ENCODE measurements at regions of chr5 and their contacts with region 1.

Region 1: DNA sequence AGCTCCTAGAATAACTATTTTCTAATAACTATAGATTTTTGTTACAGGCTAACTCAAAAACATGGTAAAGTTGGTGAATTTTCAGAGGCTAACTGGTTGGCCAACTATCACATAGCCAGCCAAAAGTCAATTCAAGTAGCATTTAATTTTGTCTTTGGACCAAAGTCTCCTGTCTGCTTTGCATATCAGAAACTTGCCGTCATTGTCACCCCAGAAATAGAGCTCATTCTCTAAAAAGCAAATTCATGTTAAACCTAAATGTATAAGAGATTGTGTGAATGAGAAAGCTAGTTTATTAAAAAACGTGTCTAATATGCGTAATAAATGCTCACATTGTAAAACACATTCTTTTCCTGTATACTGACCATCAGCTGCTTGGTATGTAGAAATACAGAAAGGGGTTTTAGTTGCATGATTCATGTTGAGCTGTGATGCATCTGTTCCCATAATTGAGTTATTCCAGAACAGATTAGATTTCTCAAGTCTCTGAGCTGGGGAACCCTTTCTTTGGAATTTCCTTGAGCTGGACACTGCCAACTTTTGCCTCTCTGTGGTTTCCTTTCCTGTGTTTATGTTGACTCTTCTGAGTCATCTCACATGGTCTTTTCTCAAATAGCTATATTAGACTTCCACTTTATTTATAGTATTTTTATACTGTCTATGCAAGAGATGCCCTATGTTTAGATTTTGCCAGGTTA is 7.3 kb downstream of the SRFBP1 start:
- DNase-seq: no peak
- ATAC-seq: peak; percentile 81 to 85
- H3K4me3 ChIP-seq: no peak overlapping the region
- H3K27ac ChIP-seq: peak overlapping the region in 1 of 4 donors; percentile 40
- H3K4me1 ChIP-seq: peaks cover 21 to 22% of the 10 kb centered on the region in 2 donors
- H3K27me3 ChIP-seq: no peaks in the 10 kb centered on the region
- CTCF ChIP-seq: no peak
- POLR2A ChIP-seq: no peak

Region 2: GRCh38 chr5:121870489-121870888 is 98.6 kb before region 1 on chr5:
- in situ Hi-C with region 1: no loop called
- intact Hi-C with region 1: no loop called
- DNase-seq: no peak
- ATAC-seq: no peak
- H3K4me3 ChIP-seq: no peak overlapping the region
- H3K27ac ChIP-seq: no peak overlapping the region
- H3K4me1 ChIP-seq: peaks cover 7 to 13% of the 10 kb centered on the region in 2 donors
- H3K27me3 ChIP-seq: no peaks in the 10 kb centered on the region
- CTCF ChIP-seq: no peak
- POLR2A ChIP-seq: no peak

Region 3: GRCh38 chr5:122076664-122077365 is 107.8 kb after region 1 on chr5:
- in situ Hi-C with region 1: no loop called
- intact Hi-C with region 1: loop called (anchors 5 kb)
- DNase-seq: peak; percentile 29 to 34
- ATAC-seq: peak in 1 of 2 donors; percentile 31
- H3K4me3 ChIP-seq: peak overlapping the region; percentile 49 to 77 (median 56)
- H3K27ac ChIP-seq: peak overlapping the region in 1 of 4 donors; percentile 18
- H3K4me1 ChIP-seq: peaks cover 0 to 17% of the 10 kb centered on the region in 2 donors
- H3K27me3 ChIP-seq: peaks cover 0 to 11% (median 5%) of the 10 kb centered on the region in 3 donors
- CTCF ChIP-seq: peak in 4 of 5 experiments; percentile 15 to 63 (median 44)
- POLR2A ChIP-seq: no peak

Region 4: GRCh38 chr5:122097391-122097790 is 128.3 kb after region 1 on chr5:
- in situ Hi-C with region 1: no loop called
- intact Hi-C with region 1: loop called (anchors 2 kb)
- DNase-seq: no peak
- ATAC-seq: no peak
- H3K4me3 ChIP-seq: no peak overlapping the region
- H3K27ac ChIP-seq: no peak overlapping the region
- H3K4me1 ChIP-seq: no peaks in the 10 kb centered on the region
- H3K27me3 ChIP-seq: no peaks in the 10 kb centered on the region
- CTCF ChIP-seq: no peak
- POLR2A ChIP-seq: no peak